ENCODE measurements at regions of chrX and their contacts with region 1.

Region 1: GRCh38 chrX:17689971-17690409 is 47.3 kb upstream of the SCML1 start:
- DNase-seq: peak; percentile 16
- ATAC-seq: peak; percentile 74; the same call in 1 of the 2 replicates
- H3K4me3 ChIP-seq: no peak overlapping the region
- H3K27ac ChIP-seq: no peak overlapping the region
- H3K4me1 ChIP-seq: no peaks in the 10 kb centered on the region
- H3K27me3 ChIP-seq: no peaks in the 10 kb centered on the region
- CTCF ChIP-seq: peak; percentile 47 to 55 (median 52); a peak in 5 of 6 replicates
- POLR2A ChIP-seq: no peak
- RAD21 ChIP-seq: peak; percentile 75

Region 2: GRCh38 chrX:17120816-17121215 is 569.2 kb before region 1 on chrX:
- CTCF ChIA-PET with region 1: no interaction called
- POLR2A ChIA-PET with region 1: no interaction called
- RAD21 ChIA-PET with region 1: no interaction called
- intact Hi-C with region 1: loop called (anchors 5 kb)
- DNase-seq: no peak
- ATAC-seq: no peak
- H3K4me3 ChIP-seq: no peak overlapping the region
- H3K27ac ChIP-seq: no peak overlapping the region
- H3K4me1 ChIP-seq: no peaks in the 10 kb centered on the region
- H3K27me3 ChIP-seq: no peaks in the 10 kb centered on the region
- CTCF ChIP-seq: no peak
- POLR2A ChIP-seq: no peak
- RAD21 ChIP-seq: no peak

Region 3: GRCh38 chrX:17160971-17161370 is 529.0 kb before region 1 on chrX:
- CTCF ChIA-PET with region 1: no interaction called
- POLR2A ChIA-PET with region 1: no interaction called
- RAD21 ChIA-PET with region 1: no interaction called
- intact Hi-C with region 1: loop called (anchors 1 kb)
- DNase-seq: no peak
- ATAC-seq: no peak
- H3K4me3 ChIP-seq: no peak overlapping the region
- H3K27ac ChIP-seq: no peak overlapping the region
- H3K4me1 ChIP-seq: no peaks in the 10 kb centered on the region
- H3K27me3 ChIP-seq: no peaks in the 10 kb centered on the region
- CTCF ChIP-seq: peak; percentile 20 to 35 (median 33); a peak in 5 of 6 replicates
- POLR2A ChIP-seq: no peak
- RAD21 ChIP-seq: peak; percentile 60

Region 4: GRCh38 chrX:17242470-17242869 is 447.5 kb before region 1 on chrX:
- CTCF ChIA-PET with region 1: interaction called, 4 read pairs
- POLR2A ChIA-PET with region 1: no interaction called
- RAD21 ChIA-PET with region 1: no interaction called
- intact Hi-C with region 1: loop called (anchors 1 kb)
- DNase-seq: peak; percentile 34
- ATAC-seq: peak; percentile 79
- H3K4me3 ChIP-seq: no peak overlapping the region
- H3K27ac ChIP-seq: no peak overlapping the region
- H3K4me1 ChIP-seq: no peaks in the 10 kb centered on the region
- H3K27me3 ChIP-seq: no peaks in the 10 kb centered on the region
- CTCF ChIP-seq: peak; percentile 61 to 73 (median 67)
- POLR2A ChIP-seq: no peak
- RAD21 ChIP-seq: peak; percentile 74

Region 5: DNA sequence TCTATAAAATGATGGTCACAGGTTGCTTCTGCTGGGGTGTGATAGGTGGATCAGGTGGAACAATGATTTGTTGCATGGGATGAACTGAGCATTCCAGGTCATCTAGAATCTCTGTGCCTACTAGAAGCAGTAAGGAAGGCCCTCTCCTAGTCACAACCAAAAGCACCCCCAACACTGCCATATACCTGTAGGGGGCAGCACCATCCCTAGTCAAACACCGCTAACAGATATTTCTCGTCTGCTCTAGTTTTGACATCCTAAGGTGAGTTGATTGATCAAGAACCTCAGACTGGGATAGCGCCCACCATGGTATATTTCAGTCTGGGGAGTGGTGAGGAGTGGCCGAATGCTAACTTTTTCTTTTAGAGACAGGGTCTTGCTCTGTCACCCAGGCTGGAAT is 154.8 kb before region 1 on chrX:
- CTCF ChIA-PET with region 1: no interaction called
- POLR2A ChIA-PET with region 1: no interaction called
- RAD21 ChIA-PET with region 1: no interaction called
- intact Hi-C with region 1: loop called (anchors 1 kb)
- DNase-seq: peak; percentile 16
- ATAC-seq: peak; percentile 72
- H3K4me3 ChIP-seq: no peak overlapping the region
- H3K27ac ChIP-seq: no peak overlapping the region
- H3K4me1 ChIP-seq: no peaks in the 10 kb centered on the region
- H3K27me3 ChIP-seq: no peaks in the 10 kb centered on the region
- CTCF ChIP-seq: peak; percentile 39 to 65 (median 59); a peak in 5 of 6 replicates
- POLR2A ChIP-seq: no peak
- RAD21 ChIP-seq: peak; percentile 68

Measured in HCT116 (cell line).